Psoas muscle (tissue), 8 donors: ENCODE measurements at regions of chr9 and their contacts with region 1.

Region 1: DNA sequence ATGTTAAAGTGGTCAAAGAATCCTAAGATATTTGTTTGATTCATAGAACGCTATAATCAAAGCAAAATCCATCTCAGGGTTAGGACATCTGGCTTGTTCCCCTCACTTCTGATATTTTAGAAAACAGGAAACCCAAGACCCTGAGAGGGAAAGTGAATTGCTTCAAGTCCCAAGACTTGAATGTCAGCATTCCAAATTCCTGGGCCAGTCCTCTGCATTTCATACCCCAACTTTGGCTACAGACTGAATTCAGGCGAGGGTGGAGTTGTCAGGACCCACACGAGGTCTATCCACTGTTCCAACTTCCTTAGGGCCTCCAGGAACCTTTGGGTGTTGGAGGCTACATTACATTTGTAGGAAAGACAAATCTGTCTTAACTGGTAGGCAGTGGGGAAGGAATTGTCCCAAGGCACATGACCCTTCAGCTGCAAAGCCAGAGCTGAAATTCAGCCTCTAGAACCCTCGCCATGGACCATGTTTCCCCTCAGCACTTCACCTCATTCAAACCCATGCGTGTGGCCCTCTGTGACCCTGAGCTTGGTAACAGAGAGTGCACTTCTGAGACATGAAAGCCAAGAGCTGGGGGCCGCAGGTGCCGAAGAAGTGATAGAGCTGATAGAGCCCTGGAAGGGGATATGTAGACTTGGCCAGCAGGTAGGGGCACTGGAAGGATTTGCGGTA is 17.3 kb downstream of the TNFSF8 start:
- DNase-seq: no peak
- ATAC-seq: no peak
- H3K4me3 ChIP-seq: no peak overlapping the region
- H3K27ac ChIP-seq: no peak overlapping the region
- H3K4me1 ChIP-seq: no peaks in the 10 kb centered on the region
- H3K27me3 ChIP-seq: no peaks in the 10 kb centered on the region
- CTCF ChIP-seq: no peak

Region 2: GRCh38 chr9:114681594-114682332 is 231.3 kb before region 1 on chr9 and contains the start of gene TEX48:
- intact Hi-C with region 1: loop called in 1 of 2 experiments (anchors 1 kb)
- DNase-seq: peak; percentile 21 to 57
- ATAC-seq: peak in 3 of 4 donors; percentile 48 to 64 (median 57)
- H3K4me3 ChIP-seq: no peak within 1 kb of the TSS
- H3K27ac ChIP-seq: no peak within 1 kb of the TSS
- H3K4me1 ChIP-seq: no peaks in the 10 kb centered on the region
- H3K27me3 ChIP-seq: peaks cover 0 to 13% (median 3%) of the 10 kb centered on the region in 3 donors
- CTCF ChIP-seq: peak; percentile 56
- total RNA-seq, gene TEX48: not detected

Region 3: DNA sequence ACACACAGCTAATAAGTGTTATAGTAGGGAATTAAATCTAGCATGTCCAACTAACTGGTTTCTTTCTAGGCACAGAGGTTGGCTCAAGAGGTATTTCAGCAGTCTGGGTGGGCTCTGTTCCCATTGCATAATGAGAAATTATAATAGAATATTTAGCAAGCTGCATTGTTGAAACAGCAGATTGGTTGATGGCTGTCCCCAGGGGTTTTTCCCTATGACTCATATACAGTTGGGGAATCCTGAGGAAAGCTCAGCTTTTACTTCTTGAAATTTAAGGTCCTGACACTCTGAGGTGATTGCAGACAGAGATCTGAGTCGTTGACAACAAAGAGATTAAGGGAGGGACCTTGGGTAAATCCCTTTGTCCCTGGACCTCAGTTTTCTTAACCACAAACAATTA is 55.6 kb after region 1 on chr9:
- intact Hi-C with region 1: no loop called
- DNase-seq: no peak
- ATAC-seq: no peak
- H3K4me3 ChIP-seq: no peak overlapping the region
- H3K27ac ChIP-seq: no peak overlapping the region
- H3K4me1 ChIP-seq: no peaks in the 10 kb centered on the region
- H3K27me3 ChIP-seq: no peaks in the 10 kb centered on the region
- CTCF ChIP-seq: no peak